ENCODE measurements at regions of chr3 and their contacts with region 1.

Region 1: DNA sequence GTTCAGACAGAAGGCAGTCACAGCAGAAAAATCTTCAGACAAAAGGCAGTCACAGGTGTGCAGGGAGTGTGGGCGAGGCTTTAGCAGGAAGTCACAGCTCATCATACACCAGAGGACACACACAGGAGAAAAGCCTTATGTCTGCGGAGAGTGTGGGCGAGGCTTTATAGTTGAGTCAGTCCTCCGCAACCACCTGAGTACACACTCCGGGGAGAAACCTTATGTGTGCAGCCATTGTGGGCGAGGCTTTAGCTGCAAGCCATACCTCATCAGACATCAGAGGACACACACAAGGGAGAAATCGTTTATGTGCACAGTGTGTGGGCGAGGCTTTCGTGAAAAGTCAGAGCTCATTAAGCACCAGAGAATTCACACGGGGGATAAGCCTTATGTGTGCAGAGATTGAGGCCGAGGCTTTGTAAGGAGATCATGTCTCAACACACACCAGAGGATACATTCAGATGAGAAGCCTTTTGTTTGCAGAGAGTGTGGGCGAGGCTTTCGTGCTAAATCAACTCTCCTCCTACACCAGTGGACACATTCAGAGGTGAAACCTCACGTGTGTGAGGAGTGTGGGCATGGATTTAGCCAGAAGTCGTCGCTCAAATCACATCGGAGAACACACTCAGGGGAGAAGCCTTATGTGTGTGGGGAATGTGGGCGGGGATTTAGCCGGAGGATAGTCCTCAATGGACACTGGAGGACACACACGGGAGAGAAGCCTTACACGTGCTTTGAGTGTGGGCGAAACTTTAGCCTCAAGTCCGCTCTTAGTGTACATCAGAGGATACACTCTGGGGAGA is 27.7 kb downstream of the ZNF589 start:
- DNase-seq: no peak
- ATAC-seq: no peak
- H3K4me3 ChIP-seq: no peak overlapping the region
- H3K27ac ChIP-seq: no peak overlapping the region
- H3K4me1 ChIP-seq: no peaks in the 10 kb centered on the region
- CTCF ChIP-seq: no peak
- EP300 ChIP-seq: no peak
- POLR2A ChIP-seq: no peak
- RAD21 ChIP-seq: no peak

Region 2: GRCh38 chr3:47989981-47990440 is 278.6 kb before region 1 on chr3:
- CTCF ChIA-PET with region 1: no interaction called
- POLR2A ChIA-PET with region 1: no interaction called
- DNase-seq: peak; percentile 46 to 84
- ATAC-seq: peak; percentile 95 to 98; a peak in 5 of 6 replicates
- H3K4me3 ChIP-seq: no peak overlapping the region
- H3K27ac ChIP-seq: no peak overlapping the region
- H3K4me1 ChIP-seq: peaks cover 15% of the 10 kb centered on the region
- CTCF ChIP-seq: peak; percentile 80
- EP300 ChIP-seq: no peak
- POLR2A ChIP-seq: no peak
- RAD21 ChIP-seq: peak; percentile 78 to 83

Region 3: DNA sequence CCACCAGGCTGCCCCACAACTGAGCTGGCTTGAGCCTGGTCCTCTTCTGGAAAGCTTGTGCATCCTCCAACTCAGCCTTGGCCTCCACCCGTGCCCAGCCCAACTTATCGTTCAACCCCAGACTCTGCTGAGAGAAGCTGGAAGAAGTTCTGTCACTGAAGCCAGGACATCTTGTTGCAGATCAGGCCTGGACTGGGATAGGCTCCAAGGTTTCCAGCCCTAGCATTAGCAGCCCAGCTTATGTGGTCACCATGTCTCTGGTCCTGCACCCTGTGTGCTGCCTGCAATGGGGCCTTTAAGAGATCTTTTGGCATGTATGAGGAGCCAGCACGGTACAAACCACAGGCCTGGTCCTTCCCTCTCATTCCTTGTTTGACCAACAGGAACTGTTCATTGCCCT is 60.5 kb before region 1 on chr3:
- CTCF ChIA-PET with region 1: no interaction called
- POLR2A ChIA-PET with region 1: no interaction called
- DNase-seq: no peak
- ATAC-seq: no peak
- H3K4me3 ChIP-seq: no peak overlapping the region
- H3K27ac ChIP-seq: no peak overlapping the region
- H3K4me1 ChIP-seq: no peaks in the 10 kb centered on the region
- CTCF ChIP-seq: no peak
- EP300 ChIP-seq: no peak
- POLR2A ChIP-seq: no peak
- RAD21 ChIP-seq: no peak

Region 4: DNA sequence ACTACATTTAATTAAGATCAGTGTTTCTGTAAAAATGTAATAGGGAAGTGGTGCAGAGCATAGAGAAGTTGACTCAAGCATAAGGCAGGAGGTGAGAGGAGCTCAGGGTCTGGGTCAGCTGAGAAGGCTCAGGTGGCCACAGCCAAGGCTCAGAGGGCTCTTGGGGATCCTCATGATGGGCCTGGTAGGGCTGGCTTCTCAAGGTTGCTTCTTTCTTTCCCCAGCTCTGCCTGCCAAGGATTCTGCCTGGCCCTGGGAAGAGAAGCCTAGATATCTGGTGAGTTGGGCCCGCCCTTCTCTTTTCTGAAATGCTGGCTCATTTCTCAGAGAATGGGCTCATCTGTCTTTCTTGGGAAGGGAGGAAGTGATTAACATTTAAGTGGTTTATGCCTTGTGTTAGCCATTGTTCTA is 21.2 kb before region 1 on chr3:
- CTCF ChIA-PET with region 1: interaction called, 6 read pairs
- POLR2A ChIA-PET with region 1: interaction called, 11 read pairs
- DNase-seq: no peak
- ATAC-seq: no peak
- H3K4me3 ChIP-seq: no peak overlapping the region
- H3K27ac ChIP-seq: no peak overlapping the region
- H3K4me1 ChIP-seq: no peaks in the 10 kb centered on the region
- CTCF ChIP-seq: no peak
- EP300 ChIP-seq: no peak
- POLR2A ChIP-seq: no peak
- RAD21 ChIP-seq: no peak